Ovary (tissue), 10 donors: ENCODE measurements at regions of chr20 and their contacts with region 1.

Region 1: GRCh38 chr20:55415567-55416142 is 589.7 kb downstream of the CBLN4 start:
- DNase-seq: no peak
- H3K4me3 ChIP-seq: no peak overlapping the region
- H3K27ac ChIP-seq: no peak overlapping the region
- H3K4me1 ChIP-seq: peaks cover 2% of the 10 kb centered on the region
- H3K27me3 ChIP-seq: no peaks in the 10 kb centered on the region
- CTCF ChIP-seq: peak in 2 of 3 donors; percentile 36 to 38
- EP300 ChIP-seq: no peak
- POLR2A ChIP-seq: no peak

Region 2: GRCh38 chr20:56163816-56164215 is 748.2 kb after region 1 on chr20:
- intact Hi-C with region 1: loop called in 1 of 4 experiments (anchors 10 kb)
- DNase-seq: no peak
- H3K4me3 ChIP-seq: no peak overlapping the region
- H3K27ac ChIP-seq: no peak overlapping the region
- H3K4me1 ChIP-seq: no peaks in the 10 kb centered on the region
- H3K27me3 ChIP-seq: no peaks in the 10 kb centered on the region
- CTCF ChIP-seq: no peak
- EP300 ChIP-seq: no peak
- POLR2A ChIP-seq: no peak

Region 3: DNA sequence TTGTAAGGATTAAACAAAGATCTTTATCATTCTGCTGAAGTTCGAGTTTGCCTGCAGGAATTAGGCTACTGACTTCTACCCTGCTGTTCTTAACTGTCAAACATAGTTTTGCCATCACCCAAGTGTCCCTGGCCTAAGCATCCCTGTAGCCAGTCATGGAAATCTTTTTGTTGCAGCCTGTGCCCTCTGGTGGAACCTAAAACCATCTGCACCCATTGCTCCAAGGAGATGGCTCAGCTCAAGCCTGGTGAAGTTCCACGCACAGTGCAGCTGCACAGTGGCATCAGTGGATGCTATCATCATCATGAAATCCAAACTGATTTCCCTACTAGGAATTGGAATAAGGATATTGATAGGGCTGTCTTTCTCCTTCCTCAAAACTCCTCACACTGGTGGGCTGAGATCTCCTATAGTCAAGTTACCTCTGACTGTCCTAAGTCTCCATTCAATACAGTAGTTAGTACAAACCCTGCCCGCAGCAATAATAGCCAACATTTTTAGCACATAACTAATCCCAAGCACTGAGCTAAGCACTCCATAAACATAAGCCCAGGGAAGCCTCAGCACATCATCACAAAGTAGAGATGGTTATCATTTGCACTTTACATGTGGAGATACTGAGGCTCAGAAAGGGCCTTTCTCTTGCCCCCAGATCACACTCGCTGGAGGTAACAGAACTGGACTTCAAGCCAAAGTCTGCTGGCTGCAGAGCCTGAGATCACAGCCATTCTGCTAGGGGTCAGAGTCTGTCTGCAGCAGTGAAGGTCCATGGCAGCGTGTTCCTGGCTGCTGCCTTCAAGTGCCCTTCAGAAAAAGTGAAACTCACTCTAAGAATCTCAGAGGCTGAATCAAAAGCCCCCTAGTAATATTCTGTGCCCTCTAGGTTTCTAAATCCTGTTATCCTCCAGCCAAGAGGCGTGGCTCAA is 755.7 kb after region 1 on chr20:
- intact Hi-C with region 1: loop called in 2 of 4 experiments (anchors 10 kb)
- DNase-seq: peak in 3 of 5 donors; percentile 23 to 38 (median 35)
- H3K4me3 ChIP-seq: no peak overlapping the region
- H3K27ac ChIP-seq: no peak overlapping the region
- H3K4me1 ChIP-seq: peaks cover 3% of the 10 kb centered on the region
- H3K27me3 ChIP-seq: no peaks in the 10 kb centered on the region
- CTCF ChIP-seq: peak in 2 of 3 donors; percentile 37 to 41
- EP300 ChIP-seq: no peak
- POLR2A ChIP-seq: no peak